AG04450 (cell line): ENCODE measurements at regions of chr2 and their contacts with region 1.

Region 1: GRCh38 chr2:24971536-24972314 is at the start of gene DNAJC27:
- DNase-seq: peak; percentile 93
- H3K4me3 ChIP-seq: peak within 1 kb of the TSS; percentile 87
- H3K27ac ChIP-seq: peak within 1 kb of the TSS; percentile 97
- H3K27me3 ChIP-seq: no peaks in the 10 kb centered on the region
- CTCF ChIP-seq: no peak
- polyA plus RNA-seq, gene DNAJC27: 3.5 and 4.1 TPM in 2 replicates

Region 2: GRCh38 chr2:24730481-24730880 is 241.2 kb before region 1 on chr2:
- CTCF ChIA-PET with region 1: interaction called, 13 read pairs
- POLR2A ChIA-PET with region 1: no interaction called
- DNase-seq: no peak
- H3K4me3 ChIP-seq: no peak overlapping the region
- H3K27ac ChIP-seq: no peak overlapping the region
- H3K27me3 ChIP-seq: no peaks in the 10 kb centered on the region
- CTCF ChIP-seq: no peak

Region 3: GRCh38 chr2:24984912-24985311 is 13.2 kb after region 1 on chr2:
- CTCF ChIA-PET with region 1: interaction called, 10 read pairs
- POLR2A ChIA-PET with region 1: no interaction called
- DNase-seq: no peak
- H3K4me3 ChIP-seq: no peak overlapping the region
- H3K27ac ChIP-seq: no peak overlapping the region
- H3K27me3 ChIP-seq: peaks cover 26% of the 10 kb centered on the region
- CTCF ChIP-seq: no peak

Region 4: DNA sequence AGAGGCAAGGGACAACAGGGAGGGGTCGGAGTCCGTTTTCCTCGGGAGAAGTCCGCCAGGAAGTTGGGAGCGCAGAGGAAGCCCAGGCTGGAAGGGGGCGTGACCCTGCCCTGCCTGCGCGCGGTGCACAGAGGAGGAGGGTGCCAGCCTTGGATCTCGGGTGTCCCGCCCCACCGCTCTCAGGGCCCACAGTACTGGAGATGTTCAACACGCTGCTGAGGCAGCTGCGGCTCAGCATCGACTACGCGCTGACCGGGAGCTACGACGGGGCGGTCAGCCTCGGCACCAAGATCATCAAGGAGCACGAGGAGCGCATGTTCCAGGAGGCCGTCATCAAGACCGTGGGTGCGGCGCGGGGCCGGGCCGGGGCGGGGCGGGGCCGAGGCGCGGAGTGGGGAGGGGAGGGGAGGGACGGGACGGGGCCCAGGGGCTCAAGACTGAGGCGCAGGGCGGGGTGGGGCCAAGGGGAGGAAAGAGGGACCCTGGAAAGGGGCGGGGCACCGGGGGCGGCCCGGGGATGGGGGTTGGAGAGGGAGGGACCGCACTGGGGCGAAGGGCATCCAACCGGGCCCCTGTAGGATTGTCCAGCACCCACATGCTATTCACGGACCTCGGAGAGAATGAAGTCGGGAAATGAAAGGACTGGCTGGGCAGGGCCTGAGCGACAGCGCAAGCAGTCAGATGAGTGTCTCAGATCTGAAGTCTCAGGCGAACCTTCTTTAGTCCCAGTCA is 160.0 kb after region 1 on chr2:
- CTCF ChIA-PET with region 1: interaction called, 229 read pairs
- POLR2A ChIA-PET with region 1: interaction called, 9 read pairs
- DNase-seq: no peak
- H3K4me3 ChIP-seq: no peak overlapping the region
- H3K27ac ChIP-seq: peak overlapping the region; percentile 21
- H3K27me3 ChIP-seq: peaks cover 20% of the 10 kb centered on the region
- CTCF ChIP-seq: no peak

Region 5: GRCh38 chr2:25228848-25229278 is 257.1 kb after region 1 on chr2:
- CTCF ChIA-PET with region 1: interaction called, 16 read pairs
- POLR2A ChIA-PET with region 1: no interaction called
- DNase-seq: peak; percentile 41
- H3K4me3 ChIP-seq: no peak overlapping the region
- H3K27ac ChIP-seq: peak overlapping the region; percentile 68
- H3K27me3 ChIP-seq: no peaks in the 10 kb centered on the region
- CTCF ChIP-seq: peak; percentile 80

Region 6: DNA sequence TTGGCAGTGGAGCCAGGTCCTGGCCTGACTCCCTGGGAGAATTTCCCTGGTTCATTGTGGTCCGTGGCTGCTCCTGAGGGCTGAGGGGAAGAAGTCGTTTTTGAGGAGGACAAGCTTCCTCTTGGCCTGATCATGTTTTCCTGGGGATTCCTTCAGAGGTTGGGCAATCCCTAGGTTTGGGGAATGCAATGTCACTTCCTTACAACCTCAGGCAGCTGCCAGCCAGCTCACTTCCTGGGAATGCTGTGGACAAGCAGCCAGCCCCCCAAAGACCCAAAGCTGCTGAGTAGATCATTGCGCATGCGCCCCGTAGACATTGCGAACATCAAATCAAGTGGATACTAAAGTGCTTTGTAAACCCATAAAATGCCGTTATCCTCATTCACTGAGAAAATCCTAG is 377.7 kb after region 1 on chr2:
- CTCF ChIA-PET with region 1: no interaction called
- POLR2A ChIA-PET with region 1: no interaction called
- DNase-seq: peak; percentile 37
- H3K4me3 ChIP-seq: no peak overlapping the region
- H3K27ac ChIP-seq: peak overlapping the region; percentile 55
- H3K27me3 ChIP-seq: no peaks in the 10 kb centered on the region
- CTCF ChIP-seq: no peak